ENCODE measurements at regions of chr3 and their contacts with region 1.

Region 1: GRCh38 chr3:113136071-113136470 is 75.3 kb upstream of the BOC start:
- ATAC-seq: peak in 1 of 8 experiments; percentile 23
- H3K4me3 ChIP-seq: no peak overlapping the region
- H3K27ac ChIP-seq: no peak overlapping the region
- H3K4me1 ChIP-seq: peaks cover 0 to 5% of the 10 kb centered on the region in 2 donors

Region 2: GRCh38 chr3:113255100-113255853 is 119.2 kb after region 1 on chr3:
- in situ Hi-C with region 1: loop called in 1 of 9 experiments (anchors 25 kb)
- ATAC-seq: no peak
- H3K4me3 ChIP-seq: no peak overlapping the region
- H3K27ac ChIP-seq: no peak overlapping the region
- H3K4me1 ChIP-seq: peaks cover 5 to 7% of the 10 kb centered on the region in 2 donors

Region 3: DNA sequence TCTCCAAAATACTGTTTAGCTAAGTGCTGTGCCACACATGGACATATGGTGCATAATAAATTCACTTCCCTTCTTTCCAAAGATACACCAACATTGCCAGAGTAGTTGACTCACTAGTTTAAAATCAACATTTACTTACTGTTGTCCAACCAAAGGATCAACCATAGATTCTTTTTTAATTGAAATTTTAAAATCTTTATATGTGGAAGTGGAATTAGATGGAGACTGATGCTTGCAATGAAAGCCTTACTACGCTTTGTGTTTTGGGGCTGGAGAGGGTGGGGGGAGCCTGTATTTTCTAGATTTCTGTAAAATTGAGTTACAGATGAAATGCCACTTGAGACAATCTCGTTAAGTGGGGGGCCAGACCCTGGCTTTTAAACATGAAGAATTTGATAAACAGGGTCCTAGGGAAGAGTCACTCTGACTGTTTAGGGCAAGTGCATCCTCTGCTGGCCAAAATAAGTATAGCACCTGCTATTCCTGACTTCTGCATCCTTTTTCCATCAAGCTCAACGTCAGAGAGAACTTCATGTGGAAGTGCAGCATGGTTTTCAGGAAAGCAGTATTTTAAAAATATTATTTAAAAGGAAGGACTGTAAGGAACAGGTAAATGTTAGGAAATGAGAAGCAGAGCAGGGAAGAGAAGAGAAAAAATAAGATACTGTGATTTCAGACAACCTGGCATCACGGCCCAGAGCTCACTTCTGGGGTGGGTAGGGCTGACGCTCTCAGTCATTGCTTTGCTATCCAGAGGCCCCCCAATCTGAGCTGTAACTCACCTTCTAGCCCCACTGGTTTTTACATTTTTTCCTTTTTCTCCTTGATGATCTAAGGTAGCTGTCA is 152.0 kb after region 1 on chr3:
- in situ Hi-C with region 1: loop called in 1 of 9 experiments (anchors 25 kb)
- ATAC-seq: peak; percentile 44 to 76 (median 60)
- H3K4me3 ChIP-seq: no peak overlapping the region
- H3K27ac ChIP-seq: no peak overlapping the region
- H3K4me1 ChIP-seq: peaks cover 0 to 2% of the 10 kb centered on the region in 2 donors